ENCODE measurements at regions of chrX and their contacts with region 1.

Region 1: DNA sequence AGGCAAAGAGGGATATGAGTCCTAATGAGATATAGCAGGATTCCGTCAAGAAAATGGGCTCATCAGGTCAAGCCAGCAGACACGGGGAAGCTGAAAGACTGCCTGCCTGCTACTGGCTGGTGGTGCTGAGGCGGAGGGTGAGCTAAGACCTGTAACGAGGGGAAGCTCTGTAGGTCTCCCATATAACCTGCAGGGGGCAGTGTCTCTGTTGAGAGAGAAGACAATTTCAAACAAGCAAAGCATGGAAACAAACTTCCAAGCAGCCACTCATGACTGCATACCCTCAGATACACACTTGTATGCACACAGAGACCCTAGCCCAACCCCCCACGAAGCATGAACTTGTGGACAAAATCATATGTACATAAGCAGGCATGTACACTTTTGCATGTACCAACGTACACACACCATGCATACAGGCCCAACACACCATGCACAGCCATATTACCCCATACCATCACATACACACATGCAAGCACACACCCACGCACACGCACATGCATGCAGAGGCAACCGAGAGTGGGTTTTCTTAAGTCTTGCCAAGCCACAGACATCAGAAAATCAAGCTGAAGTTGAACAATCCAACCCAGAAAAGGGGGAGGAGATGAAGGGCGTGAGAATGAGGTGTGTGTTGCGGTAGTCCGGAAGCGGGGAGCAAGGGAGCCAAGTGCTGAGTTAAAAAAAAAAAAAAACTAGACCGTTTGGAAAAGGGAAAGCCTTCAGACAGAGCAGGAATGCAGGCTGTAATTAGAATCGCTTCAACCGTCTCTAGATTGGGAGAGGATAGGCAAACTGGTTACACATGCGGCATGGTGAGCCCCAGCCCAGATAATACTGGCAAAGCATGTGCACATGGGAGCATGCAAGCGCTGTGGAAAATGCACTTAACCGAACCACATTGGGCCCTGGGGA is 71.0 kb downstream of the PJA1 start:
- DNase-seq: peak; percentile 34
- H3K4me3 ChIP-seq: no peak overlapping the region
- H3K27ac ChIP-seq: no peak overlapping the region
- H3K4me1 ChIP-seq: no peaks in the 10 kb centered on the region
- H3K27me3 ChIP-seq: peaks cover 7% of the 10 kb centered on the region
- CTCF ChIP-seq: peak; percentile 50

Region 2: DNA sequence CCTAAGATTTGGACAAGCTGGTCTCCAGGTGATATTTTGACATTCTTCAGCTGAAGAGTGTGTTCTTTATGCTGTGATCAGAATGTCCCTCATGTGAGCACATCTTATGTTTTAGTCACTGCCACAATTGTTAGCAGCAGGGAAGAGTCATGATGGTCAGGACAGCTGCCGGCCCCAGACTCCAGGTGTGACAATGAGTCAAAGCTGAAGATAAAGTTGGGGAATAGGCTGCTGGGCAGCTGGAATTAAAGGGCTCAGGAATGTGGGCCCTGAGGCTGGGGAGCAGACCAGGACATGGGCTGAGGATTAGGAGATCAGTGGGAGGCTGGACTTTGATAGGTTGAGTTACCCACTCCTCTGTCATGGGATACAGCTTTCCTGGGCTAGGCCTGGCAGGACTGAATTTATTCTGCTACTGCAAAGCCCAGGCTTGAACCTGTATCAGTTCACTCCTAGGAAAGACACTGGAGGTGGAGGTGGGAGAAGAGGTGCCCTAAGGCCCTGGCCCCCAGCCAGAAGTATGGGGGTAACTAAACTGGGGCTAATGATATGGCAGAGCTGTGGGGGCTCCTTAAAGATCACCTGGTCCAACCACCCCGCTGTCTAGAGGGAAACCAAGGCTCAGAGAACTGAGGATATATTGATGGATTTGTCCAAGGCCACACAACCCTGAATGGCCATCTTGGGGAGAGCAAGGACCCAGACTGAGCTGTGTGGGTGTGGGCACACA is 48.4 kb before region 1 on chrX:
- intact Hi-C with region 1: no loop called
- DNase-seq: peak; percentile 10
- H3K4me3 ChIP-seq: no peak overlapping the region
- H3K27ac ChIP-seq: no peak overlapping the region
- H3K4me1 ChIP-seq: no peaks in the 10 kb centered on the region
- H3K27me3 ChIP-seq: no peaks in the 10 kb centered on the region
- CTCF ChIP-seq: no peak

Region 3: GRCh38 chrX:69216911-69217310 is 122.7 kb after region 1 on chrX:
- intact Hi-C with region 1: loop called (anchors 10 kb)
- DNase-seq: no peak
- H3K4me3 ChIP-seq: no peak overlapping the region
- H3K27ac ChIP-seq: no peak overlapping the region
- H3K4me1 ChIP-seq: no peaks in the 10 kb centered on the region
- H3K27me3 ChIP-seq: no peaks in the 10 kb centered on the region
- CTCF ChIP-seq: no peak

Measured in colonic mucosa (tissue), 4 donors.